Activated B cell treated with CpG ODN at 0.5 μM for 24 hours (primary cell): ENCODE measurements at regions of chr11 and their contacts with region 1.

Region 1: DNA sequence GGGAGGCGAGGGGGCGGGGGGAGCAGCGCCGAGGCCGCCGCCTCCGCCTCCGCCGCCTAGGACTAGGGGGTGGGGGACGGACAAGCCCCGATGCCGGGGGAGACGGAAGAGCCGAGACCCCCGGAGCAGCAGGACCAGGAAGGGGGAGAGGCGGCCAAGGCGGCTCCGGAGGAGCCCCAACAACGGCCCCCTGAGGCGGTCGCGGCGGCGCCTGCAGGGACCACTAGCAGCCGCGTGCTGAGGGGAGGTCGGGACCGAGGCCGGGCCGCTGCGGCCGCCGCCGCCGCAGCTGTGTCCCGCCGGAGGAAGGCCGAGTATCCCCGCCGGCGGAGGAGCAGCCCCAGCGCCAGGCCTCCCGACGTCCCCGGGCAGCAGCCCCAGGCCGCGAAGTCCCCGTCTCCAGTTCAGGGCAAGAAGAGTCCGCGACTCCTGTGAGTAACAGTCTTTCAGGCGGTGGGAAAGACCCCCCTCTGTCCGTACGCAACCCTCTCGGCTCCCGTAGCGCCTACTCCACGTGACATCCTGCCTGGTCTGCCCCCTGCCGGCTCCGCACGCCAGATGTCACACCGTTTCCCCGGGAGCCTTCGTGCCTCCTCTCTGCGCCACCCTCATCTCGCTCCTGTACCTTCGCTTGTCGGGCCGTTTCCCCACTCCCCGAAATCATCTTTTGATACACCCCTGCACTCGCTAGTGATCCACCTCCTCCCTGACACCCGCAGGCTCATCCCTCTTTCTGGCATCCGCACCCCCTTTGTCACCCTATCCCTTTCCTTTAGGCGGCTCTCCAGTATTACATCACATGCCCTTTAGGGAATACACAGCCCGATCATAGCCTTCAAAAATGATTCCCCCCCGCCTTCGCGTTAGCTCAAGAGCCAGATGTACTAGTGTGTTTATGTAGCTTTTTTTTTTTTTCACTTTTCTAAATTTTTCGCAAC is 598 bp downstream of the ZFP91 start:
- DNase-seq: peak; percentile 87
- ATAC-seq: peak; percentile 33
- H3K4me3 Mint-ChIP-seq: peak overlapping the region; percentile 96
- H3K27ac Mint-ChIP-seq: peak overlapping the region; percentile 100
- H3K4me1 Mint-ChIP-seq: peaks cover 79% of the 10 kb centered on the region
- H3K27me3 Mint-ChIP-seq: no peaks in the 10 kb centered on the region
- CTCF ChIP-seq: no peak

Region 2: DNA sequence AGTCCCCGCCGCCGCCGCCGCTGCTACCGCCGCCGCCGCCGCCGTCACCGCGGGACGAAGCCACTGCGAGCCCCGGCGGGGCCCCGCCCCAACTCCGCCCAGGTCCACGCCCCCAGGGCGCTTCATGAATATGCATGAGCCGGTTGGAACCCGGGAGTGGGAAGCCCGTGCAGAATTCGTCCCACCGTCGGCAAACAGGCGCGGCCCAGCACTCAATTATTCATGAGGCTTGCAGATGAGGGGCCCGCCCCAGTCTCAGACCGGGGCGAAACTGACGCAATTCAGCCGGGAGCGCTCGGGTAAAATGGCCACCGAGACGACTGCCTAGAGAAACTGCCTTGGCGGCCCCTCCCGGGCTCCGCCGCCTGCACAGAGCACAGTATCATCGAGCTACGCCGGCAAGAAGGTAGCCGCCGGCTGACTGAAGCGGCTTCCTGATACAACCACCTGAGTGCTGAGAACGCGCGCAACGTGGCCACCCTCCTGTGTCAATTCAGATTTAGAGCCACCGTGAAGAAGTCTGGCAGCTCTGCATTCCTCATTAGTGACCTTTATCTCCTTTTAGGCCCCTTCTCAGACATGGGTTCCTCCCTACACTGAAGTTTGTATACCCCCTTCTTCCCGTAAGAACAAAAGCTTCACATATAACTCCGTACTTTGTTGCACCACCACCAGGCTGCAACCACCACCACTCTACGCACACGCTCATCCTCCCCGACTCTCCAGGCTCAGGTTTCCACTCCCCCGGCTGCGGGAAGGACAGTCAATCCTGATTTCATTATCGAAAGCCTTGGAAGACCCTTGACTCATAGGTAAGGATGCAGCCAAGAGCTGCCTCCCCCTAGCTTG is 1254.4 kb before region 1 on chr11 and contains the start of gene TNKS1BP1:
- CTCF ChIA-PET with region 1: no interaction called
- POLR2A ChIA-PET with region 1: no interaction called
- intact Hi-C with region 1: loop called (anchors 1 kb)
- DNase-seq: peak; percentile 89
- ATAC-seq: peak; percentile 88
- H3K4me3 Mint-ChIP-seq: peak within 1 kb of the TSS; percentile 89
- H3K27ac Mint-ChIP-seq: peak within 1 kb of the TSS; percentile 95
- H3K4me1 Mint-ChIP-seq: peaks cover 34% of the 10 kb centered on the region
- H3K27me3 Mint-ChIP-seq: no peaks in the 10 kb centered on the region
- CTCF ChIP-seq: no peak
- total RNA-seq, gene TNKS1BP1: 13.9 and 14.3 TPM in 2 replicates

Region 3: DNA sequence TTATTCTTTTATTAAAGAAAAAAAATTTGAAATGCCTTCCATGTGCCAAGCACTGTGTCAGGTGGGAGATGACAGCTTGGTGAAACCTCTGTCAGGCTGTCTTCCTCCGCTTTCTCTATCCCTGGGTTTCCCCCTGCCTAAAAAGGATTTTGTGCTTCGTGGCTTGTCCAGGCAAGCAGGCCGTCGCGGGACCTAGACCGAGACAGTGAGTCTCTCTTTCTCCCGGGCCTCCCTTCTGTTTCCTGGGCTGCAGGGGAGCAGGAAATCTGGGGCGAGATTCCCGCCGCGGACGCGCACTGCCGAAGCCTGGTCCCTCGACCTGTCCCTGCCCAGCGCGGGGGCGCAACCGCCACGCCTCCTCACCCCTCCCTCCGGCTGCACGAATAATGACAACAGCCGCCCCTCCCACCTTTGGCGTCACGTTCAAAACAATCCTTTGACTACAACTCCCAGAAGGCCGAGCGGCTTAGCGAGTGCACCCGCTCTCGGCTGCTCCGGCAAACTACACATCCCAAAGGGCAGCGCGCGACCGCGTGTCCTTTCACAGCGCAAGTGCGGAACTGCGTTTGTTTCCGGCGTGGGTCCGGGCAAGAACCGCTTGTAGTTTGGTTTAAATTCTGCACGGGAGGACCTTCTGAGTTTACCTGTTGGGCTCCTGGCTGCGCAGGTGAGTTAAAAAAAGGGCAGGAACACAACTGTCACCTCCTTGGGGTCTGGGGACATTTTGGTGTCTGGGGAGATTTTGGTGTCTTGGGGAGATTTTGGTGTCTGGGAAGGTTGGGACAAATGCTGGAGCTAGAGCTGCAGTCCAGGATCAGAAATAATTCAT is 922.1 kb before region 1 on chr11 and contains the start of gene CLP1:
- CTCF ChIA-PET with region 1: no interaction called
- POLR2A ChIA-PET with region 1: no interaction called
- intact Hi-C with region 1: loop called (anchors 1 kb)
- DNase-seq: peak; percentile 96
- ATAC-seq: peak; percentile 97
- H3K4me3 Mint-ChIP-seq: peak within 1 kb of the TSS; percentile 99
- H3K27ac Mint-ChIP-seq: peak within 1 kb of the TSS; percentile 94
- H3K4me1 Mint-ChIP-seq: peaks cover 23% of the 10 kb centered on the region
- H3K27me3 Mint-ChIP-seq: no peaks in the 10 kb centered on the region
- CTCF ChIP-seq: no peak
- total RNA-seq, gene CLP1: 20.4 and 20.9 TPM in 2 replicates

Region 4: GRCh38 chr11:58524232-58525036 is 55.0 kb before region 1 on chr11:
- CTCF ChIA-PET with region 1: no interaction called
- POLR2A ChIA-PET with region 1: interaction called, 31 read pairs
- intact Hi-C with region 1: loop called (anchors 1 kb)
- DNase-seq: no peak
- ATAC-seq: peak; percentile 18
- H3K4me3 Mint-ChIP-seq: peak overlapping the region; percentile 64
- H3K27ac Mint-ChIP-seq: peak overlapping the region; percentile 87
- H3K4me1 Mint-ChIP-seq: peaks cover 43% of the 10 kb centered on the region
- H3K27me3 Mint-ChIP-seq: no peaks in the 10 kb centered on the region
- CTCF ChIP-seq: no peak

Region 5: GRCh38 chr11:58647141-58647699 is 67.8 kb after region 1 on chr11:
- CTCF ChIA-PET with region 1: interaction called, 4 read pairs
- POLR2A ChIA-PET with region 1: interaction called, 8 read pairs
- intact Hi-C with region 1: loop called (anchors 2 kb)
- DNase-seq: peak; percentile 33
- ATAC-seq: peak; percentile 93
- H3K4me3 Mint-ChIP-seq: peak overlapping the region; percentile 3
- H3K27ac Mint-ChIP-seq: peak overlapping the region; percentile 21
- H3K4me1 Mint-ChIP-seq: peaks cover 20% of the 10 kb centered on the region
- H3K27me3 Mint-ChIP-seq: peaks cover 2% of the 10 kb centered on the region
- CTCF ChIP-seq: no peak

Region 6: DNA sequence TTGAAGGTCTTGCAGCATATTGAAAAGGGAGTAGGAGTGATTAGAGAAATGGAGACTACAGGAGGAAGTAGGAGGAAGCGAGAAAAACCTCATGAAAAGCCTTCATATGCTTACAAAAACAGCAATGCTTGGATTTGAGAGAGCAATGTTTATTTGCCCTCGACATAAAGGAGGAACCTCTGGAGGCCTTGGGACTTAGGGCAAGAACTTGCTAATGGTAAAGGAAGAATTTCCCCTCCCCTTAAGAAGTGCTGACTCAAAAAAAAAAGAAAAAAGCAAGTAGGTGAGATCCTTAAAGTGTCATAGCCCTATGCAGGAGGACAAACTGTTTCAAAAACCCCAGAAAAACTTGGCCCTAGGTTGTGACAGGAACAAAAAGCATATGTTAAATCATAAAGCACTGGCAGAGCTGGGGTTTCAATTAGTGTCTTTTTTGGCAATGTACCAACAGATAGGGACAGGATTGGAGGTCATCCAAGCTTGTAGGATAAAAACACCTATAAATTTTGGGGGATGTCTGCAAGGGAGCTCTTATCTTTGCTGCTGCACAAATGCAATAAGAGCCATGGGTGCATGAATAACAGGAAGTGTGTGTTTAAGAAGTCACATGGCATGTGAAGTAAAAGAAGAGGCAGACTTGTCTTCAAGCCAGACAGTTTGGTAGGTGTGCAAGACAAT is 147.4 kb after region 1 on chr11:
- CTCF ChIA-PET with region 1: no interaction called
- POLR2A ChIA-PET with region 1: no interaction called
- intact Hi-C with region 1: no loop called
- DNase-seq: no peak
- ATAC-seq: no peak
- H3K4me3 Mint-ChIP-seq: no peak overlapping the region
- H3K27ac Mint-ChIP-seq: peak overlapping the region; percentile 25
- H3K4me1 Mint-ChIP-seq: peaks cover 14% of the 10 kb centered on the region
- H3K27me3 Mint-ChIP-seq: no peaks in the 10 kb centered on the region
- CTCF ChIP-seq: no peak

Region 7: GRCh38 chr11:59142530-59143507 is 563.4 kb after region 1 on chr11 and contains the start of gene FAM111A:
- CTCF ChIA-PET with region 1: no interaction called
- POLR2A ChIA-PET with region 1: interaction called, 21 read pairs
- intact Hi-C with region 1: loop called (anchors 2 kb)
- DNase-seq: peak; percentile 73
- ATAC-seq: peak; percentile 76
- H3K4me3 Mint-ChIP-seq: peak within 1 kb of the TSS; percentile 99
- H3K27ac Mint-ChIP-seq: peak within 1 kb of the TSS; percentile 99
- H3K4me1 Mint-ChIP-seq: peaks cover 71% of the 10 kb centered on the region
- H3K27me3 Mint-ChIP-seq: no peaks in the 10 kb centered on the region
- CTCF ChIP-seq: no peak
- total RNA-seq, gene FAM111A: 51.5 and 64.3 TPM in 2 replicates

Region 8: DNA sequence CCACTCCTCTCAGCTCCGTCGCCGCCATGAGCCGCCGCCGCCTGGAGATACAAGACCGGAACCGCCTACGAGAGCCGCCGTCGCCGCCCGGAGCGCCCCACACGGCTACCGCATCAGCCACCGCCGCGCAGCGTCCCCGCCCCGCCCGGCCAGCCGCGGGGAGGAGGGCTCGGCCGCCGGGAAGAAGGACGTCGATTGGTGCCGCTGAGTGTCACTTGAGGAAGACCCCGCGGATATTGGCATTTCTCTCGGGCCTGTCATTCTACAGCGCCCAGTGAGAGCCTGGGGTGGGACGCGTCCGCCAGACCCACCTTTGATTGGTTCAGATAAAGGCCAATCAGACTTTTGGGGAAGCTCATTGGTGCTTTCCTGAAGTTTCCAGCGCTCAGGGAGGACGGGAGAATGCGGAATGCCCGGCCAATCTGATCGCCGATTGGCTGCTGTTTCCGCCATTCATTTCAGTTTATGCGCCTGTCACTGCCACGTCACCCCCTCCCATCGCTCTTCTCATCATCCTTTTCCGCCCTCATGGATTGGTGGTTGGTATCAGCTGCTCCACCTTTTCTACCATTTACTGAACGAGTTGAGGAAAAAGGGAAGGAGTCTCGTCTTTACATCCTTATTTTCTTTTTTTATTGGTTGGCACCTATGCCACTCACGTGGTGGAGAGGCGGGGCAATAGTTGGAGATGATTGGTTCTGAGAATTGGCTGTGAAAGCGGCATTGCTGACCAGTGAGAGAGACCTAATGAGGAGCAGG is 1036.4 kb after region 1 on chr11 and contains the start of gene OSBP:
- CTCF ChIA-PET with region 1: no interaction called
- POLR2A ChIA-PET with region 1: interaction called, 7 read pairs
- intact Hi-C with region 1: loop called (anchors 1 kb)
- DNase-seq: peak; percentile 86
- ATAC-seq: peak; percentile 80
- H3K4me3 Mint-ChIP-seq: peak within 1 kb of the TSS; percentile 96
- H3K27ac Mint-ChIP-seq: peak within 1 kb of the TSS; percentile 89
- H3K4me1 Mint-ChIP-seq: peaks cover 46% of the 10 kb centered on the region
- H3K27me3 Mint-ChIP-seq: no peaks in the 10 kb centered on the region
- CTCF ChIP-seq: no peak
- total RNA-seq, gene OSBP: 34.7 and 38.0 TPM in 2 replicates